ENCODE measurements at regions of chr5 and their contacts with region 1.

Region 1: GRCh38 chr5:13994621-13995253 is 50.2 kb upstream of the DNAH5 start:
- DNase-seq: no peak
- H3K4me3 ChIP-seq: no peak overlapping the region
- H3K27ac ChIP-seq: no peak overlapping the region
- H3K4me1 ChIP-seq: peaks cover 9% of the 10 kb centered on the region
- H3K27me3 ChIP-seq: no peaks in the 10 kb centered on the region
- CTCF ChIP-seq: no peak

Region 2: DNA sequence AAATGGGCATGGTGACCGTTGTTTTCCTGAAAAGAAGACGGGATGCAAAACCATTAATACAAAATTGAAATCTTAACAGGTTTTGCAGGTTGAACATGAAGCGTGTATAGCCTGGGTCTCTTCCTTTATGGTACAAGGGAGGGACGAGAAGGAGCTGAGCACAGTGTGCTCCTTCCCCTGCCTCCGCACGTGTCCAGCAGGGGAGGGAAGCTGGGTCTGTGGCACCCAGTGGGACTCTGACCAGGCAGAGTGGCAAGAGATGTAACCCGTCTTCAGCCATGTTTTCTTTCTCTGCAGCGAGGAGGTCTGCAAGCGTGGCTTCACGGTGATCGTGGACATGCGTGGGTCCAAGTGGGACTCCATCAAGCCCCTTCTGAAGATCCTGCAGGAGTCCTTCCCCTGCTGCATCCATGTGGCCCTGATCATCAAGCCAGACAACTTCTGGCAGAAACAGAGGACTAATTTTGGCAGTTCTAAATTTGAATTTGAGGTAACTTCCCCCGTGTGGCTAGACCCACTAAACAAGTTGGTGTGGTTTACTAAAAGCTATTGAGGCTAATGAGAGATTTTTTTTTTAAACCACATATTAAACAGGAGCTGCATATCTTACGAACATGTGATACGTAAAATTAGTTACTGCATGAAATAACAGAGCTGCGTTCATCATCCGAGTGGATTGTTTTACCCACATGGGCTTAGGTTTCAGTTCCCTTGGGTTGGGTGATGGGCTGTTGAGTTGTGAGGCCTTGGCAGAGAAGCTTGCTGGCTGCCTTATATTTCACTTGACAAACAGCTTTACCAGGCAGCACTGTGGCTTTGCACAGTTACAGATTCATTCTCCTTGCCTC is 292.1 kb after region 1 on chr5:
- CTCF ChIA-PET with region 1: no interaction called
- dilution Hi-C with region 1: loop called (anchors 5 kb)
- in situ Hi-C with region 1: no loop called
- intact Hi-C with region 1: no loop called
- DNase-seq: no peak
- H3K4me3 ChIP-seq: no peak overlapping the region
- H3K27ac ChIP-seq: no peak overlapping the region
- H3K4me1 ChIP-seq: no peaks in the 10 kb centered on the region
- H3K27me3 ChIP-seq: no peaks in the 10 kb centered on the region
- CTCF ChIP-seq: no peak

Measured in mammary epithelial cell (primary cell).